Mammary epithelial cell (primary cell): ENCODE measurements at regions of chr11 and their contacts with region 1.

Region 1: GRCh38 chr11:58654079-58654907 is 31.8 kb downstream of the CNTF start:
- DNase-seq: peak; percentile 60
- H3K4me3 ChIP-seq: no peak overlapping the region
- H3K27ac ChIP-seq: no peak overlapping the region
- H3K4me1 ChIP-seq: peaks cover 16% of the 10 kb centered on the region
- H3K27me3 ChIP-seq: no peaks in the 10 kb centered on the region
- CTCF ChIP-seq: peak; percentile 91 to 97

Region 2: GRCh38 chr11:58675334-58676155 is 21.3 kb after region 1 on chr11:
- CTCF ChIA-PET with region 1: interaction called, 3 read pairs
- dilution Hi-C with region 1: no loop called
- in situ Hi-C with region 1: no loop called
- intact Hi-C with region 1: loop called (anchors 1 kb)
- DNase-seq: peak; percentile 44
- H3K4me3 ChIP-seq: no peak overlapping the region
- H3K27ac ChIP-seq: no peak overlapping the region
- H3K4me1 ChIP-seq: peaks cover 5% of the 10 kb centered on the region
- H3K27me3 ChIP-seq: no peaks in the 10 kb centered on the region
- CTCF ChIP-seq: peak; percentile 97 to 99

Region 3: DNA sequence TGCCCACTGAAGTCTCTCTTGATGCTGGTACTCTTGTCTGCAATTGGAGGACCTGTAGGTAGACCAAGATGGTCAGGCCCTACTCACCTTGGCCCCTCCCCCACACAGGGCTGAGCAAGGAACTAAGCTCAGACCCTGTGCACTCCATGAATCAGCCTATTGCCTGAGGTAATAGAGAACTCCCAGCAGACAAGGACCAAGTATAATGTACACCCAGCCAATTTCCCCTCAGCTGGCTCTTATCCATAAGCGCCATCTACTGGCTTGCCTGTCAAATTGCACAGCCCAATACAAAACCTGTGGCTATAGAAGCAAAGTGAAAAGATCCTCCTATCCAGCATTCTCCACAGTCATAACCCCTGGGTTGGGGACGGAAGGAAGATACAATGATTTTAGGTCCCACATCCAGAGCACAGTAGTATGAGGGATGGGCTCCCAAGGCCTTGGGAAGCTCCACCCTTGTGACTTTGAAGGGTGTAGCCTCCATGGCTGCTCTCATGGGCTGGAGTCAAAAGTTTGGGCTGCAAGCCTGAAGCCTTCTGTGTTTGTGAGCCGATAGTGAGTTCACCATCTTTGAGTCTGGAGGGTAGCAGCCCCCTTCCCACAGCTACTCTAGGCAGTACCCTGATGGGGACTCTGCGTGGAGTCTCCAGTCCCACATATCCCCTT is 134.2 kb after region 1 on chr11:
- CTCF ChIA-PET with region 1: no interaction called
- dilution Hi-C with region 1: no loop called
- in situ Hi-C with region 1: loop called in 1 of 2 experiments (anchors 10 kb)
- intact Hi-C with region 1: loop called (anchors 1 kb)
- DNase-seq: peak; percentile 77
- H3K4me3 ChIP-seq: no peak overlapping the region
- H3K27ac ChIP-seq: peak overlapping the region; percentile 62
- H3K4me1 ChIP-seq: peaks cover 20% of the 10 kb centered on the region
- H3K27me3 ChIP-seq: no peaks in the 10 kb centered on the region
- CTCF ChIP-seq: peak; percentile 94 to 97

Region 4: GRCh38 chr11:58963528-58964104 is 309.3 kb after region 1 on chr11:
- CTCF ChIA-PET with region 1: no interaction called
- dilution Hi-C with region 1: no loop called
- in situ Hi-C with region 1: no loop called
- intact Hi-C with region 1: loop called (anchors 1 kb)
- DNase-seq: peak; percentile 89
- H3K4me3 ChIP-seq: no peak overlapping the region
- H3K27ac ChIP-seq: no peak overlapping the region
- H3K4me1 ChIP-seq: peaks cover 4% of the 10 kb centered on the region
- H3K27me3 ChIP-seq: peaks cover 2% of the 10 kb centered on the region
- CTCF ChIP-seq: no peak

Region 5: GRCh38 chr11:59158206-59159068 is 504.1 kb after region 1 on chr11:
- CTCF ChIA-PET with region 1: no interaction called
- dilution Hi-C with region 1: no loop called
- in situ Hi-C with region 1: no loop called
- intact Hi-C with region 1: loop called (anchors 10 kb)
- DNase-seq: peak; percentile 52
- H3K4me3 ChIP-seq: no peak overlapping the region
- H3K27ac ChIP-seq: no peak overlapping the region
- H3K4me1 ChIP-seq: no peaks in the 10 kb centered on the region
- H3K27me3 ChIP-seq: no peaks in the 10 kb centered on the region
- CTCF ChIP-seq: peak; percentile 83 to 86